Activated CD4-positive, alpha-beta T cell treated with anti-CD3 and anti-CD28 coated beads, Interleukin-2, amount 10 ng/mL, durations not matched to agents 24 days and 14 days (primary cell): ENCODE measurements at regions of chr13 and their contacts with region 1.

Region 1: GRCh38 chr13:73715114-73715910 is 418.9 kb downstream of the KLF12 start:
- DNase-seq: peak; percentile 89
- H3K4me3 Mint-ChIP-seq: peak overlapping the region; percentile 48
- H3K27ac Mint-ChIP-seq: peak overlapping the region; percentile 84
- H3K4me1 Mint-ChIP-seq: peaks cover 40% of the 10 kb centered on the region
- H3K27me3 Mint-ChIP-seq: no peaks in the 10 kb centered on the region

Region 2: GRCh38 chr13:73058736-73059459 is 656.4 kb before region 1 on chr13 and contains the start of gene KLF5:
- intact Hi-C with region 1: loop called (anchors 2 kb)
- DNase-seq: peak; percentile 99
- H3K4me3 Mint-ChIP-seq: peak within 1 kb of the TSS; percentile 86
- H3K27ac Mint-ChIP-seq: peak within 1 kb of the TSS; percentile 83
- H3K4me1 Mint-ChIP-seq: peaks cover 20% of the 10 kb centered on the region
- H3K27me3 Mint-ChIP-seq: peaks cover 49% of the 10 kb centered on the region
- total RNA-seq, gene KLF5: 2.0 and 2.8 TPM in 2 replicates

Region 3: GRCh38 chr13:73521290-73521624 is 194.1 kb before region 1 on chr13:
- intact Hi-C with region 1: loop called (anchors 2 kb)
- DNase-seq: peak; percentile 78
- H3K4me3 Mint-ChIP-seq: peak overlapping the region; percentile 78
- H3K27ac Mint-ChIP-seq: peak overlapping the region; percentile 83
- H3K4me1 Mint-ChIP-seq: peaks cover 20% of the 10 kb centered on the region
- H3K27me3 Mint-ChIP-seq: no peaks in the 10 kb centered on the region

Region 4: DNA sequence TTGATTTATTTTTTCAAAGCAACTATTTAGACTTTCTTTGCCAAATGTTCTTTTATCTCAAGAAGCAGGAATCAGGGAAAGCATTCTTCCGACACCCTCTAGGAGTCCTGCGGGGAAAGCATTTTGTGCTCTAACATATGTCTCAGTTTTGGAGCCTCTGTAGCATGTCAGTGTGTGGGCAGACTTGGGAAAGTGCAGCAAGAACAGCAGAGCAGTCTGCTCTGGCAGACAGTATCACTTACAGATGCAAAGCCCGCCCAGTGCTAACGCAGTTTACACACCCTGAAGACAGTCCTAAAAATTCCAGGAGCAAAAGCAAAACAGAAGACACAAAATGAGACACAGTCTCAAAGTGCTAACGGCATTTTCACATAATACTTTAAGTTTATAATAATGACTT is 25.4 kb after region 1 on chr13:
- intact Hi-C with region 1: no loop called
- DNase-seq: no peak
- H3K4me3 Mint-ChIP-seq: no peak overlapping the region
- H3K27ac Mint-ChIP-seq: no peak overlapping the region
- H3K4me1 Mint-ChIP-seq: peaks cover 25% of the 10 kb centered on the region
- H3K27me3 Mint-ChIP-seq: no peaks in the 10 kb centered on the region

Region 5: GRCh38 chr13:73765651-73766384 is 50.5 kb after region 1 on chr13:
- intact Hi-C with region 1: loop called (anchors 2 kb)
- DNase-seq: peak; percentile 88
- H3K4me3 Mint-ChIP-seq: peak overlapping the region; percentile 78
- H3K27ac Mint-ChIP-seq: peak overlapping the region; percentile 88
- H3K4me1 Mint-ChIP-seq: peaks cover 44% of the 10 kb centered on the region
- H3K27me3 Mint-ChIP-seq: no peaks in the 10 kb centered on the region

Region 6: DNA sequence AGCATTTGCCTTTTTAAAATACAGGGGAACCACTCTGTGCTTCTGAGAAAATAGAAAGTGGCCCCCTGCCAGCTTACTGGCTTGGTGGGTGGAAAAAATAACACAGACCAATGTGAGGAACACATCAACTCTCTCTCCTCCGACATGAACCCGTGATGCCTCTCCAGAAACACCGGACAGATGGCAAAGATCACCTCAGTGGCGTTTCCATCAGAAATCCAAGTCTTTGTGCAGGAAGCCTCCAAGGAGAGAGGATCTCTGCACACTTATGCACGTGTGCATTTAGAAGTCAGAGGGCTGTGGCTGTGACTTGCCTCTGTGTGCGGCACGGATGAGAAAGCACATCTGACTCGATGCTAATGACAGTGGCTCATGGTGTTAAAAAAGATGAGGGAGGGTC is 531.2 kb after region 1 on chr13:
- intact Hi-C with region 1: loop called (anchors 2 kb)
- DNase-seq: no peak
- H3K4me3 Mint-ChIP-seq: no peak overlapping the region
- H3K27ac Mint-ChIP-seq: no peak overlapping the region
- H3K4me1 Mint-ChIP-seq: peaks cover 54% of the 10 kb centered on the region
- H3K27me3 Mint-ChIP-seq: peaks cover 1% of the 10 kb centered on the region

Region 7: GRCh38 chr13:75489502-75490263 is 1774.4 kb after region 1 on chr13:
- intact Hi-C with region 1: loop called (anchors 5 kb)
- DNase-seq: peak; percentile 60
- H3K4me3 Mint-ChIP-seq: no peak overlapping the region
- H3K27ac Mint-ChIP-seq: peak overlapping the region; percentile 71
- H3K4me1 Mint-ChIP-seq: peaks cover 38% of the 10 kb centered on the region
- H3K27me3 Mint-ChIP-seq: peaks cover 15% of the 10 kb centered on the region